Activated T-helper 1 cell treated with anti-CD3 and anti-CD28 coated beads, Interleukin-12 subunit alpha, Interleukin-12 subunit beta, Interleukin-2, Interleukin-4 antibody, amounts not matched to agents 30 ng/mL and 10 ng/mL and 1 ng/mL, durations not matched to agents 14 hours and 24 hours and 36 hours (primary cell): ENCODE measurements at regions of chr6 and their contacts with region 1.

Region 1: DNA sequence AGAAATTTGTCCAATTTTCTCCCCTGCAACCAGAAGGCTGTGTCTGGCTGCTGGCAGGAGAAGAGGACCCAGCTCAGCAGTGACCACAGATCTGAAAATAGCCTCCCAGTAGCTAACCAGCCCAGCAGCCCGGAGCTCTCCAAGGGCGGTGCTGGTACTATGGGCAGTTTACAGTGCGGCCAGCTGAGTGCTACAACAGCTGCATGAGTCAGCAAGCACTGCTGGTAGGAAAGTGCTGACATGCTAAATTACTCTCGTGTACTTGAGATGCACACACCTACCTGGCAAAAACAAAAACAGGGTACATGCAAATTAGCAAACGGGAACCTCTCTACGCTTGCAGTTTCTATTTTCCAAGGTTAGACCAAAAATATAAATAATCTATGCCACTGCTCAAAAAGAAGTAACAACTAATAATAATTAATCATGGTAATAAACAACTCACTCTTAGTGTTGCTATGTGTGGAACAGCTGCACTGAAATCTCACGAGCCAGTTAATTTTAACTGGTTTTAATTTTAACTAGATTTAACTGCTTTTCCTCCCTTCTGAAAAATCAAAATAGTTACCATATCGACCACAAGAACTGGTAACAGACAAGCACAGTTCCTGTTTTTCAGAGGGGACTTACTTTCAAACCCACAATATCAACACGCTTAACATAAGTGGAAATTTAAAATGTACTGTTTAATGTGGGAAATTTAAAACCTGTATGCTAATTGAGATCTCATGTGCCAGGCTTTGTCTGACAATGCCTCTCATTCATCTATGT is 10.8 kb downstream of the BACH2 start:
- DNase-seq: peak; percentile 47
- H3K4me3 Mint-ChIP-seq: peak overlapping the region; percentile 79
- H3K27ac Mint-ChIP-seq: peak overlapping the region; percentile 97
- H3K4me1 Mint-ChIP-seq: peaks cover 89% of the 10 kb centered on the region
- H3K27me3 Mint-ChIP-seq: peaks cover 3% of the 10 kb centered on the region

Region 2: GRCh38 chr6:90103056-90103800 is 182.6 kb before region 1 on chr6:
- intact Hi-C with region 1: loop called (anchors 1 kb)
- DNase-seq: no peak
- H3K4me3 Mint-ChIP-seq: peak overlapping the region; percentile 79
- H3K27ac Mint-ChIP-seq: peak overlapping the region; percentile 88
- H3K4me1 Mint-ChIP-seq: peaks cover 70% of the 10 kb centered on the region
- H3K27me3 Mint-ChIP-seq: no peaks in the 10 kb centered on the region

Region 3: GRCh38 chr6:90219209-90219985 is 66.4 kb before region 1 on chr6:
- intact Hi-C with region 1: loop called (anchors 1 kb)
- DNase-seq: no peak
- H3K4me3 Mint-ChIP-seq: no peak overlapping the region
- H3K27ac Mint-ChIP-seq: no peak overlapping the region
- H3K4me1 Mint-ChIP-seq: no peaks in the 10 kb centered on the region
- H3K27me3 Mint-ChIP-seq: no peaks in the 10 kb centered on the region

Region 4: GRCh38 chr6:90274451-90275030 is 11.3 kb before region 1 on chr6:
- intact Hi-C with region 1: loop called (anchors 1 kb)
- DNase-seq: peak; percentile 75
- H3K4me3 Mint-ChIP-seq: peak overlapping the region; percentile 75
- H3K27ac Mint-ChIP-seq: peak overlapping the region; percentile 94
- H3K4me1 Mint-ChIP-seq: peaks cover 86% of the 10 kb centered on the region
- H3K27me3 Mint-ChIP-seq: no peaks in the 10 kb centered on the region

Region 5: GRCh38 chr6:90304308-90304707 is 18.5 kb after region 1 on chr6:
- intact Hi-C with region 1: no loop called
- DNase-seq: no peak
- H3K4me3 Mint-ChIP-seq: no peak overlapping the region
- H3K27ac Mint-ChIP-seq: no peak overlapping the region
- H3K4me1 Mint-ChIP-seq: peaks cover 20% of the 10 kb centered on the region
- H3K27me3 Mint-ChIP-seq: peaks cover 51% of the 10 kb centered on the region

Region 6: GRCh38 chr6:90375681-90376439 is 90.1 kb after region 1 on chr6:
- intact Hi-C with region 1: no loop called
- DNase-seq: no peak
- H3K4me3 Mint-ChIP-seq: no peak overlapping the region
- H3K27ac Mint-ChIP-seq: no peak overlapping the region
- H3K4me1 Mint-ChIP-seq: peaks cover 2% of the 10 kb centered on the region
- H3K27me3 Mint-ChIP-seq: peaks cover 14% of the 10 kb centered on the region

Region 7: GRCh38 chr6:90425161-90425641 is 139.4 kb after region 1 on chr6:
- intact Hi-C with region 1: loop called (anchors 2 kb)
- DNase-seq: no peak
- H3K4me3 Mint-ChIP-seq: peak overlapping the region; percentile 68
- H3K27ac Mint-ChIP-seq: peak overlapping the region; percentile 87
- H3K4me1 Mint-ChIP-seq: peaks cover 26% of the 10 kb centered on the region
- H3K27me3 Mint-ChIP-seq: no peaks in the 10 kb centered on the region

Region 8: DNA sequence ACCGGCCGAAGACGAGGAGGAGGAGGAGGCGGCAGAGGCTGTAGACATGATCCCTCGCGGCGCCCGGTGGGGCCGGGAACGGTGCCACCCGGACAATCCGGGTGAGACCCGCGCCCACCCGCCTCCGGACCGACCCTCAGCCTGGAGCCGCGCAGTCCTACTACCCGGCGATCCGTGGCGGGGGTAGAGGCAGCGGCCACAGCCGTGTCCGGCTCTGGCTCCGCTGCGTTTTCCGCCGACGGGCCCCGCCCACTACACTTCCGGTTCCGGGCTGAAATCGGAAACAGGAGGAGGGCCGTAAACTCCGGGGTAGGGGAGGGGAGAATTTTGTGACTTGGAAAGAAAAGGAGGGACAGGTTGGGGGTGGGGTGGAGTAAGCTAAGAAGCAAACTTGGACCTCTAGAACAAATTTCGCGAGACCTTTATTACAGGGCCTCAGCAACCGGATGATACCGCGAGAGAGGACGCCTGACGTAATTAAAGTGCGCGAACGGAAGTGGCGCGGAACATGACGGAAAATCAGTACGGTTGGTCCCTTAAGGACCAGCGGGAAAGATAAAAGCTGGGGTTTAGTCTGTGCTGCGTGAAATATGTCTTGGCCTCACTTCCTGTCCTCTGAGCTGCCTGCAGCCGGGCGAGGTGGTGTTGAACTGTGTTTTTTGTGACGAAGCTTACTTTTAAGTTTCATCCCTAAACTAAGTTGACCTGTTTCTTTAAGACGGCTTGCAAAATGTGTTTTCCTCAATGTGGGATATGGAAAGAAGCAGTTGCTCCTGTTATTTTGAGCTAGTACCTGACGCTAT is 301.2 kb after region 1 on chr6 and contains the start of gene MAP3K7:
- intact Hi-C with region 1: loop called (anchors 2 kb)
- DNase-seq: peak; percentile 92
- H3K4me3 Mint-ChIP-seq: peak within 1 kb of the TSS; percentile 93
- H3K27ac Mint-ChIP-seq: peak within 1 kb of the TSS; percentile 96
- H3K4me1 Mint-ChIP-seq: peaks cover 39% of the 10 kb centered on the region
- H3K27me3 Mint-ChIP-seq: peaks cover 8% of the 10 kb centered on the region
- total RNA-seq, gene MAP3K7: 31.0 and 35.9 TPM in 2 replicates